HEK293 (cell line): ENCODE measurements at regions of chr19 and their contacts with region 1.

Region 1: DNA sequence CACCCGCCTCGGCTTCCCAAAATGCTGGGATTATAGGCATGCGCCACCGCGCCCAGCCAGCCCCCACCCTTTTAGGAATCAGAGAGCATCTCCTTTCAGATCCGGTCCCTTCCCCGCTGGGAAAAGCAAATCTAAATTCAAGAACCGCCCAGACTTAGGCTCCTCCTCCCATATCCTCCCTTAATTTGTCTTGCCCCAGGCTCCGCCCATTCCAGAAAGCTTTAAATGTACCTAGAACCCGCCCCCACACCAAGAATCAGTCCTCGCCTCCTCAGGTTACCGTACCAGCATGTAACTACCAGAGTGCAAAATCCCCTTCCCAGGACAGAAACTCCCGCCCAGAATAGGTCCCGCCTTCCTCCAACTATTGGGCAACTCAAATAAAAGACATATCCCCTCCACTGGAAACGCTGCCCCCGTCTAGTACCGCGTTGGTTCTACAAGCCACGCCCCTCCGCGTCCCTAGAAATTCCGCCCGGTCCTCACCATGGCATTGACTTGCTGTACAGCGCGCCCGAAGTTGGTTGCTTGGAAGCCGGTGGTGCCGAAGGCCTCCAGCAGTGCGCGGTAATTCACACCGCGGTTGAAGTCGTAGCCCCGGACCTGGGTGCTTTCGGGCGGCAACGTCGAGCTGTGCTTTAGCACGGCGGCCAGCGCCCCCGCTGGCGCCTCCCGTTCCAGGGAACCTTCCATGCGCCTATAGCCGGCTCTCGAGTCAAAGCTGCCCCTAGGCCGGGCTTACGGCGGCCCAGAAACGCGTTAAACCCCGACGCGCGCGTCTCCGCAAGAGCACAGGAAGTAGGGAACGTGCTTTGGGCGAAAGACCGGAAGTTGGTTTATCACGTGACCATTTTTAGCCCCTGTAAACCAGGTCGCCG is at the start of gene DHPS:
- H3K4me3 ChIP-seq: peak within 1 kb of the TSS; percentile 84
- H3K27ac ChIP-seq: peak within 1 kb of the TSS; percentile 95
- H3K4me1 ChIP-seq: no peaks in the 10 kb centered on the region
- CTCF ChIP-seq: peak; percentile 51; the same call in 1 of the 2 replicates

Region 2: DNA sequence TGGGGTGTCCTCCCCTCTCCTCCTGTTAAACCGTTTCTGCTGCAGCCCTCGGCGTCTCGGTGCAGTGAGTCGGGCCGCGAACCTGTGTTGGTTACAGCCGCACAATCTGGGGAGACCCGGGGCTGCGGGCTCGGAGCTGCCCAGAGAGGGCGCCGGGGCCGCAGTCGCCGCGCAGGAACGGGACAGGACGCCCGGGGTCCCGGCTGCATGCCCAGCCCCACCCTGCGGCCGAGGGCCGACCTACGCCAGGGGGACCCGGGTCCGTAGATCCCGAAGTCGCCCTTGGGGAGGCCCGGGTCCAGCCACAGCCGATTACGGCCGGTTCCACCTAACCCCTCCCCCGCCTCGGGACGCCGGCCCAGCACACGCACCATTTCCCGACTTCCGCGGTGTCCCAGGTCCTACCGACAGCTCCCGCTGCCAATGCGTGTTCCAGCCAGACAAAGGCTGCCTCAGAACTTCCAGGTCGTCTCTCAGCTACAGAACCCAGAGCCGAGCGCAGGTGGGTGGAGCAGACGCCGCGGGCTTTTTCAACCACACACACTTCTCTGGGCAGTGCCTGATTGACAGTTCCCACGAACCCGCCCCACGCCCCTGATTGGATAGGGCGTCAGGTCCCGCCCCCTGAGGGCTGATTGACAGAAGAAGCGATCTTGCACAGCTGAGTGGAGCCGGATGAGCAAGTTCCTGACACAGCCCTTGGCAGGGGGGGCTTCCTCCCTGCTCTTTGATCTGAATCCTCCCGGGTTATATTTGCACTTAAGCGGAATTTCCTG is 240.6 kb before region 1 on chr19 and contains the start of gene ZNF443:
- CTCF ChIA-PET with region 1: no interaction called
- POLR2A ChIA-PET with region 1: no interaction called
- H3K4me3 ChIP-seq: peak within 1 kb of the TSS; percentile 76
- H3K27ac ChIP-seq: peak within 1 kb of the TSS; percentile 72
- H3K4me1 ChIP-seq: no peaks in the 10 kb centered on the region
- CTCF ChIP-seq: peak; percentile 13; the same call in 1 of the 2 replicates

Region 3: GRCh38 chr19:12567951-12568350 is 113.4 kb before region 1 on chr19:
- CTCF ChIA-PET with region 1: no interaction called
- POLR2A ChIA-PET with region 1: interaction called, 12 read pairs
- H3K4me3 ChIP-seq: no peak overlapping the region
- H3K27ac ChIP-seq: no peak overlapping the region
- H3K4me1 ChIP-seq: no peaks in the 10 kb centered on the region
- CTCF ChIP-seq: no peak

Region 4: DNA sequence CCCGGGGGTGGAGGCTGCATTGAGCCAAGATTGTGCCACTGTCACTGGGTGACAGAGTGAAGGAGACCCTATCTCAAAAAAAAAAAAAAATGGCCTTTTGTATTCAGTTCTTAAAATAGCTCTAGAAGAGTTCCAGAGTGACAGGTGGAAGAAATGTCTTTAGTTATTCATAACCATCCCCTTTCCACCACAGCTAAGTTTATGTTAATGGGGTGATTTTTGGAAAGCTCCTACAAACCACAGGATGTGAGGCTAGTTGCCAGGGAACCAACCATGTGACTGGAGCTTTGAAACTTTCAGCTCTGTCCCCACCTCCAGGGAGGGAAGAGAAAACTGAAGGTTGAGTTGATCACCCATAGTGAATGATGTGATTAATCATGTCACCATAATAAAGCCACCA is 77.6 kb before region 1 on chr19:
- CTCF ChIA-PET with region 1: no interaction called
- POLR2A ChIA-PET with region 1: interaction called, 14 read pairs
- H3K4me3 ChIP-seq: no peak overlapping the region
- H3K27ac ChIP-seq: no peak overlapping the region
- H3K4me1 ChIP-seq: no peaks in the 10 kb centered on the region
- CTCF ChIP-seq: no peak

Region 5: GRCh38 chr19:12628040-12629022 is 53.0 kb before region 1 on chr19:
- CTCF ChIA-PET with region 1: no interaction called
- POLR2A ChIA-PET with region 1: no interaction called
- H3K4me3 ChIP-seq: no peak overlapping the region
- H3K27ac ChIP-seq: no peak overlapping the region
- H3K4me1 ChIP-seq: no peaks in the 10 kb centered on the region
- CTCF ChIP-seq: no peak

Region 6: GRCh38 chr19:12696366-12697335 is 15.3 kb after region 1 on chr19 and contains the start of gene FBXW9:
- CTCF ChIA-PET with region 1: interaction called, 6 read pairs
- POLR2A ChIA-PET with region 1: interaction called, 14 read pairs
- H3K4me3 ChIP-seq: peak within 1 kb of the TSS; percentile 84
- H3K27ac ChIP-seq: peak within 1 kb of the TSS; percentile 79
- H3K4me1 ChIP-seq: no peaks in the 10 kb centered on the region
- CTCF ChIP-seq: peak; percentile 24; the same call in 1 of the 2 replicates

Region 7: GRCh38 chr19:12796146-12797071 is 115.1 kb after region 1 on chr19:
- CTCF ChIA-PET with region 1: interaction called, 16 read pairs
- POLR2A ChIA-PET with region 1: interaction called, 7 read pairs
- H3K4me3 ChIP-seq: no peak overlapping the region
- H3K27ac ChIP-seq: no peak overlapping the region
- H3K4me1 ChIP-seq: peaks cover 4% of the 10 kb centered on the region
- CTCF ChIP-seq: peak; percentile 97

Region 8: DNA sequence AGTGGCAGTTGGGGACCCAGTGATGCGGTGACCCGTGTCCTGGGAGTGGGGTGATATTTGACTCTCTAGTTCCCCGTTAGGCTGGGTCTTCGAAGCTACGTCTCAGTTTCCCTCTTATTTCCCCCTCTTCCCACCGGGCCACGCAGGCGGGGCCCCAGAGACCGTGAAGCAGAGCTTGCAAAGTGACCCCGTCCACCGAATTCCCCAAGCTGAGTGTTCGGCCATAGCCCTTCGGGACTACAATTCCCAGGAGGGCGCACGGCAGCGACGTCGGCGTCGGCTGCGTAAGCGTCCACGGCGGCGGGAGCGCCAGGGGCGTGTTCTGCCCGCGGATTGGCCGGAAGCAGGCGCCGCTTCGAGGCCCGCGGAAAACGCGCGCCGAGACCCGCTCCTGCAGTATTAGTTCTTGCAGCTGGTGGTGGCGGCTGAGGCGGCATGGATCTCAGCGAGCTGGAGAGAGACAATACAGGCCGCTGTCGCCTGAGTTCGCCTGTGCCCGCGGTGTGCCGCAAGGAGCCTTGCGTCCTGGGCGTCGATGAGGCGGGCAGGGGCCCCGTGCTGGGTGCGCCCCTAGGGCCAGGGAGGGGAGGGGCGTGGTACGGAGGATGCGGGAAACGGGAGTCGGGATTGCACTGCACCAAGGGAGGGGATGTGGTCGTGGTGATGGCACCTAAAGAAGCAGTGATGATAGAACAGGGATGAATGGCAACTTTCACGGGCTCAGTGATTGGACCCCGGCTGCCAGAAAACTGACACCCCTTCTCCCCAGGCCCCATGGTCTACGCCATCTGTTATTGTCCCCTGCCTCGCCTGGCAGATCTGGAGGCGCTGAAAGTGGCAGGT is 125.1 kb after region 1 on chr19 and contains the start of gene RNASEH2A:
- CTCF ChIA-PET with region 1: no interaction called
- POLR2A ChIA-PET with region 1: no interaction called
- H3K4me3 ChIP-seq: peak within 1 kb of the TSS; percentile 68
- H3K27ac ChIP-seq: peak within 1 kb of the TSS; percentile 75
- H3K4me1 ChIP-seq: no peaks in the 10 kb centered on the region; the same call in 1 of the 2 replicates
- CTCF ChIP-seq: peak; percentile 86